Posterior cingulate gyrus (tissue), 11 donors: ENCODE measurements at regions of chr2 and their contacts with region 1.

Region 1: GRCh38 chr2:174259981-174260380 is 11.6 kb upstream of the OLA1 start:
- DNase-seq: no peak

Region 2: GRCh38 chr2:174078275-174078674 is 181.7 kb before region 1 on chr2:
- intact Hi-C with region 1: no loop called
- DNase-seq: no peak

Region 3: GRCh38 chr2:174300089-174300488 is 40.1 kb after region 1 on chr2:
- intact Hi-C with region 1: loop called (anchors 2 kb)
- DNase-seq: no peak

Region 4: GRCh38 chr2:174376967-174377366 is 117.0 kb after region 1 on chr2:
- intact Hi-C with region 1: no loop called
- DNase-seq: no peak

Region 5: GRCh38 chr2:174615871-174616436 is 356.0 kb after region 1 on chr2:
- intact Hi-C with region 1: no loop called
- DNase-seq: no peak